Naive thymus-derived CD4-positive, alpha-beta T cell (primary cell): ENCODE measurements at regions of chr10 and their contacts with region 1.

Region 1: DNA sequence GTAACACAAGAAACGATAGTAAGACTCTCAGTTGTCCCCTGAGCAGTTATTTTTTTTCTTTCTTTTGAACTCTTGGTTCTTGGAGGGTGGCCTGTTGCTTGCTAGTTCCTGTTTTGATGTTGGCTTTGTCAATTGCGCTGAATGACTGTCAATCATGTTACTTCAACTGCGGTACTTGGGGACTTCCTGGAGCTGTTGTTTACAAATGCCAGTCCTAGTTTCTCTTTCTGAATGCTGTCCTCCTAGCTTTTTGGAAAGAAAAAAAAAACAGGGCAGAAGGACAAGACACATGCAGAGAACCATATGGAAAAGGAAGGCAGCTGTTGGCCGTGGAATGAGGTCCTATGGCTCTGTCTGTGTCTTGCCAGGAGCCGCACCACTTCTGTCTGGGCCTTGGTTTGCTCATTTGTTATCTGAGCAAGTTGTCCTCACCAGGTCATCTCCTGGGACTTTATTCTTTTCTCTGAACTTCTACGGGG is 7.0 kb upstream of the PDCD4 start:
- DNase-seq: peak in 7 of 9 donors; percentile 73 to 92 (median 88)
- ATAC-seq: peak; percentile 81
- H3K4me3 ChIP-seq: peak overlapping the region; percentile 46
- H3K4me3 Mint-ChIP-seq: peak overlapping the region; percentile 72 to 88 (median 80)
- H3K27ac ChIP-seq: peak overlapping the region; percentile 100
- H3K27ac Mint-ChIP-seq: peak overlapping the region; percentile 92 to 100 (median 99)
- H3K4me1 ChIP-seq: peaks cover 97 to 98% of the 10 kb centered on the region in 2 donors
- H3K4me1 Mint-ChIP-seq: peaks cover 81 to 100% (median 98%) of the 10 kb centered on the region in 7 donors
- H3K27me3 ChIP-seq: no peaks in the 10 kb centered on the region
- H3K27me3 Mint-ChIP-seq: no peaks in the 10 kb centered on the region

Region 2: DNA sequence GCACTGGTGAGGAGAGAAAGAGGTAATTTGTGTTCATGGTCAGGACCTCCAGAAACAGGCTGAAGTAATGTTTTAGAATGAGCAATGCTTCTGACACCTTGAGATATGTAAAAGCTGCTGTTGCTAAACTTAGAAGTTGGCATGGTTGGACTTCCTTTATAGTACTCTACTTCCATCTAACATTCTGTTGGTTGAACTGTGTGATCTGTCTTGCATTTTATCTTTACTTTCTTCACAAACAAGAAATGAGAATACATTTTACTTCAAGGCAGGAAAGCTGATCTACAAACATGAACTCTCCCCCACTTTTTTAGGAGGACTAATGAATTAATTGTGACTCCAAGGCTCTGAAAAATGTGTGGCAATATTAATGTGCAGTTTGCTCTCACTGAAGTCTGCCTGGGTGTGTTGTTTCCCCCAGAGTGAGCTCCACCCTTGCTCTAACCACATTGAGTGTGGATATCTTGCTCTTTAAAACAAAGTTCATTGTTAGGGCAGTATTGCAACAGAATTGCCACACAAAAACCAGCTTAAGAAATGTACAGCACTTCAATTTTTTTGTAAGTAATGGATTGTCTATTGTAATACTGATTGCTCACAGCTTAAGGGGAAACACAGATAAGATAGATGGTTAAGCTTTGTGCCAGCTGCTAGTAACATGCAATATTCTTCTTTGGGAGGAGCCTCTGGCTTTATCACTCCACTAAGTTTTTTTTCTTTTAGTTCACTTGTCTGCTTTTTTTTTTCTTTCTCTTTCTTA is 788.0 kb before region 1 on chr10:
- CTCF ChIA-PET with region 1: no interaction called
- POLR2A ChIA-PET with region 1: interaction called, 3 read pairs
- intact Hi-C with region 1: loop called in 1 of 2 experiments (anchors 10 kb)
- DNase-seq: peak in 7 of 9 donors; percentile 47 to 74 (median 60)
- ATAC-seq: peak; percentile 85
- H3K4me3 ChIP-seq: peak overlapping the region; percentile 21
- H3K4me3 Mint-ChIP-seq: peak overlapping the region; percentile 73 to 92 (median 86)
- H3K27ac ChIP-seq: peak overlapping the region; percentile 56
- H3K27ac Mint-ChIP-seq: peak overlapping the region; percentile 79 to 97 (median 94)
- H3K4me1 ChIP-seq: peaks cover 69 to 84% of the 10 kb centered on the region in 2 donors
- H3K4me1 Mint-ChIP-seq: peaks cover 64 to 97% (median 87%) of the 10 kb centered on the region in 7 donors
- H3K27me3 ChIP-seq: no peaks in the 10 kb centered on the region
- H3K27me3 Mint-ChIP-seq: no peaks in the 10 kb centered on the region

Region 3: DNA sequence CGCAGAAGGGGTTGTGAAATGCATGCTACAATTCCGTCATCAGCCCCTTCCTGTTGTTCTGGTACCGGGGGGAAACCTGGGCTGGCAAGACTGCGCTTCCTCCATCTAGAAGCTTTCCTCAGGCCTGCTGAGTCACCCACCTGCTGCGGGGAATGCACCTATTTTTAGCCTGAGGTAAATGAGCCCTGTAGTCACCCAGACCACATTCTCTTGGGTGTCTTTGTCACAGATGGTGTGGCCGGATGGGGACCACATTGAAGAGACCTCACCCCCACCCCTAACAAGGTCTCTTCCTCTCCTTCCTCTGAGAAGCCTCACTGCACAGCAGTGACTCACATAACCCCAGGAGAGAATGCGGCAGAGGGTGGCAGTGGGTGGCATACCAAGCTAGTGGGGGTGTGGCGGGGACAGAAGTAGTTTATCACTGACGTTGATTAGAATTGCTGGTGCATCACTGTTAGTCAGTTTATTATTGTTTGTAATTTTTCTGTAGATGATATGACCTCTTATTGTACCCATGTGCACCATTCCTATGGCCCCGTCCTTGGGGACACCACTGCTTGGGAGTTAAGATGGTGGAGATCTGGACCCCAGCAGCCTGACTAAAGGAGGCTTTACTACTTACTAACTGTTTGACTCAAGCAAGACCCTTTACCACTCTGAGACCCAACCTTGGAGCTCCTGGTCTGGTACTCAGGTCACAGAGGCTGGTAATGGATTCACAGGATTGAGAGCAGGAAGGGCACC is 450.0 kb before region 1 on chr10:
- CTCF ChIA-PET with region 1: no interaction called
- POLR2A ChIA-PET with region 1: no interaction called
- intact Hi-C with region 1: loop called in 1 of 2 experiments (anchors 10 kb)
- DNase-seq: peak; percentile 42 to 84 (median 69)
- ATAC-seq: peak; percentile 96
- H3K4me3 ChIP-seq: no peak overlapping the region
- H3K4me3 Mint-ChIP-seq: peak overlapping the region in 9 of 10 donors; percentile 13 to 71 (median 40)
- H3K27ac ChIP-seq: no peak overlapping the region
- H3K27ac Mint-ChIP-seq: peak overlapping the region; percentile 20 to 88 (median 74)
- H3K4me1 ChIP-seq: peaks cover 14 to 35% of the 10 kb centered on the region in 2 donors
- H3K4me1 Mint-ChIP-seq: peaks cover 19 to 64% (median 26%) of the 10 kb centered on the region in 7 donors
- H3K27me3 ChIP-seq: no peaks in the 10 kb centered on the region
- H3K27me3 Mint-ChIP-seq: peaks cover 0 to 5% (median 0%) of the 10 kb centered on the region in 5 donors

Region 4: DNA sequence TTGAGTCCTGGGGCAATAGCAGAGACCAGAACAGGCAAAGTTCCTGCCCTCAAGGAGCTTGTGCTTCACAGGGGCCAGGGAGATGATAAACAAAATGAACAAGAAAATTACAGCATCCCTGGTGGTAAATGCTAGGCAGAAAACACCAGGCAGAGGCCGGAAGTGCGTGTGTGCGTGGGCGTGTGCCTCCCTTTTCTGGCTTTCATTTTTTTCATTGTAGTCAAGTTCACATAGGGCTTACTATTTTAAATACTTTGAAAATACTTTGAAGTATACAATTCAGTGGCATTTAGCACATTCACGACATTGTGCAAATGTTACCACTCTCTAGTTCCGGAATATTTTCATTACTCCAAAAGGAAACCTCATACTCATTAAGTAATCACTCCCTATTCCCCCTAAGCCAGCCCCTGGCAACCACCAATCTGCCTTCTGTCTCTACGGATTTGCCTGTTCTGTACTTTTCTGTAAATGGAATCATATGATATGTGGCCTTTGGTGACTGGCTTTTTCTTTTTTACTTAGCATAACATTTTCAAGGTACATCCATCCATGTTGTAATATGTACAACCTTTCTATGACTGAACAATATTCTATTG is 81.1 kb before region 1 on chr10:
- CTCF ChIA-PET with region 1: no interaction called
- POLR2A ChIA-PET with region 1: interaction called, 4 read pairs
- intact Hi-C with region 1: loop called in 1 of 2 experiments (anchors 1 kb)
- DNase-seq: peak; percentile 36 to 92 (median 88)
- ATAC-seq: peak; percentile 94
- H3K4me3 ChIP-seq: no peak overlapping the region
- H3K4me3 Mint-ChIP-seq: peak overlapping the region; percentile 5 to 69 (median 50)
- H3K27ac ChIP-seq: peak overlapping the region; percentile 70
- H3K27ac Mint-ChIP-seq: peak overlapping the region; percentile 68 to 97 (median 93)
- H3K4me1 ChIP-seq: peaks cover 4 to 21% of the 10 kb centered on the region in 2 donors
- H3K4me1 Mint-ChIP-seq: peaks cover 1 to 72% (median 44%) of the 10 kb centered on the region in 7 donors
- H3K27me3 ChIP-seq: no peaks in the 10 kb centered on the region
- H3K27me3 Mint-ChIP-seq: no peaks in the 10 kb centered on the region

Region 5: DNA sequence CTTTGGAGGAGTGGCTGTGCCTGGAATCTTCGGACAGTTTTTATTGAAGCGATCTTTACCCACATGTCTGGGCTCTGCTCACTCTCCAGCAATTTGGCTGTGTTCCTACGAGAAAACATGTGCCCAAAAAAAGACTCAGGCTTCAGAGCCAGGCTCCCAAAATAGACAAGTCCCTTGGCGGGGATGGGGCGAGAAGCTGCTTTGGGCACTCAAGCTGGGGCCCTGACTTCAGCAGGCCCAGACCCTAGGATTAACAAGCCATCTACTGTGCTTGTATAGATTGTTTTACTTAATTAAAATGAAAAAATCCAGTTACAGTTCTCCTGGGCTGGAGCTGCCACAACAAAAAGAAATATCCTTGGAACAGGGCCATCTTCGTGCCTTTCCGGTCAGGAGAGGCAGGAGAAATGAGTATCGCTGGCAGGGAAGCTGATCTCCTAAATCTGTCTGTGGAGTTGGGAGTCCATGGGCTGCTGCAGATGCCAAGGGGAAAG is 44.3 kb before region 1 on chr10:
- CTCF ChIA-PET with region 1: interaction called, 3 read pairs
- POLR2A ChIA-PET with region 1: interaction called, 22 read pairs
- intact Hi-C with region 1: no loop called
- DNase-seq: no peak
- ATAC-seq: no peak
- H3K4me3 ChIP-seq: no peak overlapping the region
- H3K4me3 Mint-ChIP-seq: no peak overlapping the region
- H3K27ac ChIP-seq: no peak overlapping the region
- H3K27ac Mint-ChIP-seq: peak overlapping the region in 5 of 9 donors; percentile 19 to 59 (median 33)
- H3K4me1 ChIP-seq: peaks cover 0 to 18% of the 10 kb centered on the region in 2 donors
- H3K4me1 Mint-ChIP-seq: peaks cover 17 to 45% (median 27%) of the 10 kb centered on the region in 7 donors
- H3K27me3 ChIP-seq: no peaks in the 10 kb centered on the region
- H3K27me3 Mint-ChIP-seq: peaks cover 0 to 7% (median 0%) of the 10 kb centered on the region in 5 donors

Region 6: DNA sequence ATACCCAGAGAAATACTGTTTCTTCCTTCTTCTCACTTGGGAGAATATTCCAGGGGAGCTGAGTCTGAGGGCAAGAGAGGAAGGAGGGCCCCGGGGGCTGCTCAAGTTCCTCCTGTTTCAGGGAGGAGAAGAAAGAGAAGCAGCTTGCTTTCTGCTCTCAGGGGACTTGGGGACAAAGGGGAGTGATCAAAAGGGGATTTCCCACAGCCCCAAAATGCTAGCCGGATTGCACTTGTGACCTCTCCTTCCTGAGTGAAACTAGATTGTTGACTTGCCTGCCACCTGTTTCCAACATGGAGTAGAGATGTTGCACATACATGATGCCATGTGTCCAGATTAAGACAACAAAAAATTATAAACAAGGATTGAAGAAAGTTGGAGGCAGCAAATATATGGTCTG is 21.7 kb before region 1 on chr10:
- CTCF ChIA-PET with region 1: interaction called, 8 read pairs
- POLR2A ChIA-PET with region 1: interaction called, 63 read pairs
- intact Hi-C with region 1: loop called in 1 of 2 experiments (anchors 1 kb)
- DNase-seq: peak in 7 of 9 donors; percentile 35 to 60 (median 46)
- ATAC-seq: peak; percentile 88
- H3K4me3 ChIP-seq: no peak overlapping the region
- H3K4me3 Mint-ChIP-seq: peak overlapping the region in 8 of 10 donors; percentile 1 to 67 (median 42)
- H3K27ac ChIP-seq: peak overlapping the region; percentile 40
- H3K27ac Mint-ChIP-seq: peak overlapping the region; percentile 79 to 98 (median 89)
- H3K4me1 ChIP-seq: peaks cover 22 to 27% of the 10 kb centered on the region in 2 donors
- H3K4me1 Mint-ChIP-seq: peaks cover 36 to 67% (median 54%) of the 10 kb centered on the region in 7 donors
- H3K27me3 ChIP-seq: no peaks in the 10 kb centered on the region
- H3K27me3 Mint-ChIP-seq: no peaks in the 10 kb centered on the region